CD8-positive, alpha-beta memory T cell (primary cell): ENCODE measurements at regions of chr16 and their contacts with region 1.

Region 1: GRCh38 chr16:20874088-20874581 is 26.0 kb downstream of the DCUN1D3 start:
- DNase-seq: no peak
- H3K4me3 ChIP-seq: peak overlapping the region; percentile 29
- H3K4me3 Mint-ChIP-seq: peak overlapping the region; percentile 50 to 80 (median 70)
- H3K27ac ChIP-seq: peak overlapping the region; percentile 7
- H3K27ac Mint-ChIP-seq: peak overlapping the region; percentile 84 to 97 (median 92)
- H3K4me1 ChIP-seq: peaks cover 30% of the 10 kb centered on the region
- H3K4me1 Mint-ChIP-seq: peaks cover 37 to 54% (median 50%) of the 10 kb centered on the region in 3 donors
- H3K27me3 ChIP-seq: no peaks in the 10 kb centered on the region
- H3K27me3 Mint-ChIP-seq: no peaks in the 10 kb centered on the region

Region 2: GRCh38 chr16:20806168-20807050 is 67.7 kb before region 1 on chr16 and contains the starts of genes ERI2 and REXO5:
- CTCF ChIA-PET with region 1: interaction called, 10 read pairs
- POLR2A ChIA-PET with region 1: interaction called, 3 read pairs
- DNase-seq: peak; percentile 59 to 83 (median 67)
- H3K4me3 ChIP-seq: peak within 1 kb of the TSS; percentile 93
- H3K4me3 Mint-ChIP-seq: peak within 1 kb of the TSS; percentile 94 to 99 (median 99)
- H3K27ac ChIP-seq: peak within 1 kb of the TSS; percentile 84
- H3K27ac Mint-ChIP-seq: peak within 1 kb of the TSS; percentile 80 to 99 (median 97)
- H3K4me1 ChIP-seq: peaks cover 8% of the 10 kb centered on the region
- H3K4me1 Mint-ChIP-seq: peaks cover 16 to 25% (median 24%) of the 10 kb centered on the region in 3 donors
- H3K27me3 ChIP-seq: no peaks in the 10 kb centered on the region
- H3K27me3 Mint-ChIP-seq: no peaks in the 10 kb centered on the region
- total RNA-seq, gene ERI2: 17.4 to 22.2 TPM
- total RNA-seq, gene REXO5: 7.9 to 9.3 TPM

Region 3: GRCh38 chr16:20859699-20860098 is 14.4 kb before region 1 on chr16:
- CTCF ChIA-PET with region 1: no interaction called
- POLR2A ChIA-PET with region 1: no interaction called
- DNase-seq: no peak
- H3K4me3 ChIP-seq: no peak overlapping the region
- H3K4me3 Mint-ChIP-seq: no peak overlapping the region
- H3K27ac ChIP-seq: no peak overlapping the region
- H3K27ac Mint-ChIP-seq: peak overlapping the region in 3 of 8 donors; percentile 47 to 51 (median 47)
- H3K4me1 ChIP-seq: no peaks in the 10 kb centered on the region
- H3K4me1 Mint-ChIP-seq: peaks cover 9 to 10% (median 9%) of the 10 kb centered on the region in 3 donors
- H3K27me3 ChIP-seq: no peaks in the 10 kb centered on the region
- H3K27me3 Mint-ChIP-seq: no peaks in the 10 kb centered on the region

Region 4: DNA sequence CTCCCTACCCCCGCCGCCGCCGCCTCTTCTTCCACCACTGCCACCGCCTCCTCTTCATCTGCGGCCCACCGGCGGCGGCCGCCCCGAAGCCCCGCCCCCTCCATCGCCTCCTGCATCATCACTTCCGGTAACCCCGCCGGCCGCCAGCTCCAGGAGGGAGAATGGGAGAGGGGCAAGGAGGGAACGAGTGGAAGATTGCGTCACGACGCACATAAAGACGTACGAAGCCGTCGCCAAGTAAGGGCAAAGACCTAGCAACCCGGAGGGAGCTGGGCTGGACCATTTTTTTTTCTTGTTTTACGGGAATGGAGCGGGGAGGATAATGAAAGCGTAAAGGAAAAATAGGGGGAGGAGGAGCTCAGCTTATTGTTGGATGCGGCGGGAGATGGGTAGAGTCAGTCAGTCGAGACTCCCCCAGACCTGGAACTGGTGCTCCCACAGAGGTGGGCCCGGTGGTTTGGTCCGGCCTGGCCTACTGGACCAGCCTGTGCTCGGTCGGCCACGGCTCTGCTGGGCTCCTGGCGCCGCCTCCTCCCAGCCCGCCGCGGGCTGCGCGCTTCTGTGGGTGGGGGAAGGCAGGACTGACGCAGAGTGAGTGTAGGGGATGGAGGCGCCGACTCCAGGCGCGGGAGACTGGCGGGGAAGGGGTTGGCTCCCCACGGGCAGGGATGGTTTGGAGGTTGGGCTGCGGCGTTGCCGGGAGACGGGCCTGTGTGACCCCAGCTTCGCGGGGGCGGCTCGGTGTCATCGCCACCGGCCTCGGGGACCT is 26.3 kb after region 1 on chr16 and contains the starts of genes DCUN1D3 and LYRM1:
- CTCF ChIA-PET with region 1: interaction called, 15 read pairs
- POLR2A ChIA-PET with region 1: interaction called, 6 read pairs
- DNase-seq: peak; percentile 78 to 89 (median 85)
- H3K4me3 ChIP-seq: peak within 1 kb of the TSS; percentile 91
- H3K4me3 Mint-ChIP-seq: peak within 1 kb of the TSS; percentile 90 to 97 (median 94)
- H3K27ac ChIP-seq: peak within 1 kb of the TSS; percentile 96
- H3K27ac Mint-ChIP-seq: peak within 1 kb of the TSS; percentile 93 to 100 (median 98)
- H3K4me1 ChIP-seq: peaks cover 42% of the 10 kb centered on the region
- H3K4me1 Mint-ChIP-seq: peaks cover 62 to 80% (median 76%) of the 10 kb centered on the region in 3 donors
- H3K27me3 ChIP-seq: no peaks in the 10 kb centered on the region
- H3K27me3 Mint-ChIP-seq: peaks cover 0 to 4% of the 10 kb centered on the region in 2 donors
- total RNA-seq, gene DCUN1D3: 12.7 to 13.2 TPM
- total RNA-seq, gene LYRM1: 33.9 to 35.1 TPM